AG04450 (cell line): ENCODE measurements at regions of chr3 and their contacts with region 1.

Region 1: GRCh38 chr3:49171119-49171774 is at the start of gene KLHDC8B:
- DNase-seq: peak; percentile 57
- H3K4me3 ChIP-seq: peak within 1 kb of the TSS; percentile 83
- H3K27ac ChIP-seq: peak within 1 kb of the TSS; percentile 70
- H3K27me3 ChIP-seq: no peaks in the 10 kb centered on the region
- CTCF ChIP-seq: peak; percentile 91
- polyA plus RNA-seq, gene KLHDC8B: 20.7 and 21.2 TPM in 2 replicates

Region 2: DNA sequence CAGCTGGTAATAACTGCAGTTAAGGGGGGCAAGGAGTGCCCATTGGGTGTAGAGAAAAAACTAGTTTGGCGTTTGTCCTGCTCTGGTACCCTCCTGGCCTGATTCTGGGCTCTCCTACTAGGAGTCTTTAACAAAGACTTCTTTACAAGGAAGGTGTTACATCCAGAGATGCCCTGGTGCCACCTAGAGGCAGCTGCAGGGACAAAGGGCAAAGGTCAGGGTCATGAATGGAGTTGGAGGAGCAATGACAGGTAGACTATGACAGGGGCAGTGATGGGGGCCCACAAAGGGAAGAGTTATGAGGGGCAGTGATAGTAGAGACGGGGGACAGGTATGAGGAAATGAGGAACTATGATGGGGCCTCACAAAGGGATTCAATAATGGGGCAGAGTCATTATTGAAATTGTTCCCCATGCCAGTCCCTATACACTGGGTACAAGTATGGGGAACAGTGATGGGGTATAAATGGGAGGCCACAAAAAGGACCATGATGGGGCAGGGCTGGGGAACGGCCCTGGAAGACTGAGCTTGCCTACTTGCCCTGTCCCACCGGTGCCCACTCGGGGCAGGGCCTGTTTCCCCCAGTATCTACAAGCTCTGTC is 13.0 kb before region 1 on chr3:
- CTCF ChIA-PET with region 1: interaction called, 13 read pairs
- POLR2A ChIA-PET with region 1: interaction called, 3 read pairs
- DNase-seq: no peak
- H3K4me3 ChIP-seq: no peak overlapping the region
- H3K27ac ChIP-seq: no peak overlapping the region
- H3K27me3 ChIP-seq: no peaks in the 10 kb centered on the region
- CTCF ChIP-seq: peak; percentile 13; the same call in 1 of the 2 replicates

Region 3: GRCh38 chr3:49181351-49181750 is 10.1 kb after region 1 on chr3:
- CTCF ChIA-PET with region 1: interaction called, 26 read pairs
- POLR2A ChIA-PET with region 1: no interaction called
- DNase-seq: no peak
- H3K4me3 ChIP-seq: no peak overlapping the region
- H3K27ac ChIP-seq: no peak overlapping the region
- H3K27me3 ChIP-seq: no peaks in the 10 kb centered on the region
- CTCF ChIP-seq: no peak

Region 4: DNA sequence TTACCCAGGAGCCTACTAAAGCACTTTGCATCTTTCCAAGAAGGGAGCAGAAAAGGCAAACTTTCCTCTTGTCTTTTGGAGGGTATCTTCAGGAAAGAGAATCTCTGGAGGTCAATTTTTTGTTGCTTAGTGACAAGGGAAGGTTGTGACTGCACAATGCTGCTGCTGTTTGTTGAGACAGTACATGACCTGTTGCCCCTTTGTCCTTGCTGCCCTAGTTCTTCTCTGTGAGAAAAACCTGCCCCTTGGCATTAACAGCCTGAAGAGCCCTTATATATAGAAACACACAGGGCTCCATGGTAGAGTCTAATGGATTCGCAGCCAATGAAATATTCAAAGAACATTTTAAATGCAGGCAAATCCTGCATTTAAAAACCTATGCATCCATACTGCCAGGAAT is 20.5 kb after region 1 on chr3:
- CTCF ChIA-PET with region 1: interaction called, 23 read pairs
- POLR2A ChIA-PET with region 1: no interaction called
- DNase-seq: no peak
- H3K4me3 ChIP-seq: no peak overlapping the region
- H3K27ac ChIP-seq: no peak overlapping the region
- H3K27me3 ChIP-seq: peaks cover 3% of the 10 kb centered on the region
- CTCF ChIP-seq: no peak

Region 5: GRCh38 chr3:49305608-49306007 is 134.4 kb after region 1 on chr3:
- CTCF ChIA-PET with region 1: no interaction called
- POLR2A ChIA-PET with region 1: interaction called, 10 read pairs
- DNase-seq: no peak
- H3K4me3 ChIP-seq: no peak overlapping the region
- H3K27ac ChIP-seq: no peak overlapping the region
- H3K27me3 ChIP-seq: no peaks in the 10 kb centered on the region
- CTCF ChIP-seq: no peak

Region 6: DNA sequence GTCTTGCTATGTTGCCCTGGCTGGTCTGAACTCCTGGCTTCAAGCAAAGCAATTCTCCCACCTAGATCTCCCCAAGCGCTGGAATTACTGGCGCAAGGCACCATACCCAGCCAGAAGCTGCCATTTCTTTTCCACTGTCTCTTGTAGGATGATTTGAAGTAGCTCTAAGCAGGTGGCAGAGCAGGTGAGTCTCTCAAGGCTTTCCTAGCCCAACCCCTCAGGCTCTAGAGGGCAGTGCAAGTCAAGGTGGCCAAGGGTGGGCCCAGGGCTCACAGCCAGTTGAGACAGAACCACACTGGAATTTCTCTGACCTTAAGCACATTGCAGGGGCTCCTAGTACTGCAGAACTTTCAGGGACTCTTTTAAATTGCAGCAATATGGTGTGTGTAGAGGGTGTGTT is 283.2 kb after region 1 on chr3:
- CTCF ChIA-PET with region 1: interaction called, 18 read pairs
- POLR2A ChIA-PET with region 1: no interaction called
- DNase-seq: no peak
- H3K4me3 ChIP-seq: no peak overlapping the region
- H3K27ac ChIP-seq: no peak overlapping the region
- H3K27me3 ChIP-seq: no peaks in the 10 kb centered on the region
- CTCF ChIP-seq: no peak